Activated CD8-positive, alpha-beta T cell treated with anti-CD3 and anti-CD28 coated beads for 36 hours (primary cell): ENCODE measurements at regions of chr10 and their contacts with region 1.

Region 1: DNA sequence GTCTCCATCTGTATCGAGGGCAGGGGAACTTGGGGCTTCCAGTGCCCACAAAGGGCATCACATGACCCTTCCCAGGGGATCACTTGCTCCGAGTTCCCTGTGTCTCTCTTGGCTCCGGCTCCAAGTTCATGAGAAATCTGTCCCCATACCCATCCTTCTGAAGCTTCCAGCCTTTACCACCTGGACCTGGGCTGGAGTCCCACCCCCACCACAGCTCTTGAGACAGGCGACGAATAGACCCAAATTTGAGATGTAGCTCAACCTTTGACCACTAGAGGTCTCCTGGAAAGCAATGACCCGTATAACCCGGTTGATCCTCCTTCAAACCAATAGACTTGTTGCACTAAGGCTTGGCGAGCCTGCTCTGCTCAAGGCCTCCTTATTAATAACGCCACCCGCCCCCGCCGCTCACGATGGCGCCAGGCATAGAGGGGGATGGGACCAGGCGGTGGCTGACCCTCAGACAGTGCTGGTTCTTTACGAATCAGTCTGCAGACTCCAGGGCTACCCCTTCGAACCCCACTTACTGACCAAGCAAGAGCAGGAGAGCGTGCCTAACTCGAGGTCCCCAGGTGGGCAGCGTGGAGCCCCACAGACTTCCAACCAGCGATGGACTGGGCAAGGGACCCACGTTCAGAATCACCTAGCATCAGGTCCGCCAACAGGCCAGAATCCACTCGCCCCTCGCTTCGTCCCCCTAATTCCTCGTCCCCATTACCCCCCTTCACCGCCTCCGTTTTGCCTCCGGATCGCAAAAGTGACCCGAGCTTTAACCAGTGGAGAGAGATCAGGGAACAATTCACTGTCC is 4.4 kb upstream of the ARID5B start:
- DNase-seq: peak; percentile 74
- ATAC-seq: peak; percentile 78
- H3K4me3 Mint-ChIP-seq: peak overlapping the region; percentile 55
- H3K27ac Mint-ChIP-seq: peak overlapping the region; percentile 97
- H3K4me1 Mint-ChIP-seq: peaks cover 42% of the 10 kb centered on the region
- H3K27me3 Mint-ChIP-seq: no peaks in the 10 kb centered on the region
- CTCF ChIP-seq: peak; percentile 67

Region 2: GRCh38 chr10:61882621-61883373 is 14.3 kb before region 1 on chr10:
- CTCF ChIA-PET with region 1: interaction called, 50 read pairs
- POLR2A ChIA-PET with region 1: interaction called, 26 read pairs
- intact Hi-C with region 1: no loop called
- DNase-seq: peak; percentile 90
- ATAC-seq: peak; percentile 86
- H3K4me3 Mint-ChIP-seq: peak overlapping the region; percentile 43
- H3K27ac Mint-ChIP-seq: peak overlapping the region; percentile 95
- H3K4me1 Mint-ChIP-seq: peaks cover 30% of the 10 kb centered on the region
- H3K27me3 Mint-ChIP-seq: no peaks in the 10 kb centered on the region
- CTCF ChIP-seq: no peak

Region 3: GRCh38 chr10:61943674-61944410 is 46.8 kb after region 1 on chr10:
- CTCF ChIA-PET with region 1: interaction called, 98 read pairs
- POLR2A ChIA-PET with region 1: interaction called, 137 read pairs
- intact Hi-C with region 1: no loop called
- DNase-seq: peak; percentile 58
- ATAC-seq: peak; percentile 77
- H3K4me3 Mint-ChIP-seq: peak overlapping the region; percentile 70
- H3K27ac Mint-ChIP-seq: peak overlapping the region; percentile 98
- H3K4me1 Mint-ChIP-seq: peaks cover 64% of the 10 kb centered on the region
- H3K27me3 Mint-ChIP-seq: no peaks in the 10 kb centered on the region
- CTCF ChIP-seq: no peak

Region 4: DNA sequence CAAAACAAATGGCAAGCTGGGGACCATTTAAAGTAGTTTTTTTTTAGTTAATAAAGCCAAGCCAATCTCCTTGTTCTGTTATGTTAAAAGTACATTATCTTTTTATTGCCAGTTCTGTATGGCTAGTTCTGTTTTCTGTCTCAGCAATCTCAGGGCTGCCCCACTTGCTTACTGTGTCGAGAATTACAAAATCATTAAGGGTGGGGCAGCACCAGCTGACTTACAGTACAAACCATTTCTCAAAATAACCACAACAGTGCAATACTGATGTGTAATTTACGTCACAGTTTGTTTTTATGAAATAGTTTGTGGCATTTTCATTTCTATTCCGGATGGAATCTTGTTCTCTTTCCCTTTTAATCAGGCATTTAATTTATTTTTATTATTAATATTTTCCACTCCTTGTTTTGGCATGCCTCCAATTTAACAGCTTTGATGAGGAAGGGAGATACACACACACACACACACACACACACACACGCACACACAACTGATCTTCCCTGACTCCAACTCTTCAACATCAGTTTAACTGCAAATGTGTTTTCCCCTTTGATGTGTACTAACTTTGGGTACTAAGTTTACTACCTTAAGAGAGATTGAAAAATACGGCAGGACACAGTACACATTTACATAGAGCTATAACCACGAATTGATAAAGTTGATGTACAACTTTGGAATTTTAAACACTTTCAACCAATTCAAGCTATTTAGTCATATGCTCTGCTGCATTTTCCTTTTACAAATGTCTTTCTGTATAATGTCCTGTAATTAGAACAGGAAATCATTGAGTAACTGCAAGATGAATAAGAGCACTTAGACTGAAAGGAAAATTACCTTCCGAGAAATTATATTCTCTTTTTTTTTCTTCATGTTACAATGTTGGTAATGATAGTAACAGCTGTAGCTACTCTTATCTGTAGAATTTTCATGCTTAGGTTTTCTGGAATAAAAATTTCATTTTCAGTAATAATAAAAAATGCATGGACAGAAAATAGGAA is 95.9 kb after region 1 on chr10:
- CTCF ChIA-PET with region 1: interaction called, 6 read pairs
- POLR2A ChIA-PET with region 1: interaction called, 17 read pairs
- intact Hi-C with region 1: loop called (anchors 2 kb)
- DNase-seq: peak; percentile 72
- ATAC-seq: peak; percentile 41
- H3K4me3 Mint-ChIP-seq: peak overlapping the region; percentile 68
- H3K27ac Mint-ChIP-seq: peak overlapping the region; percentile 95
- H3K4me1 Mint-ChIP-seq: peaks cover 66% of the 10 kb centered on the region
- H3K27me3 Mint-ChIP-seq: no peaks in the 10 kb centered on the region
- CTCF ChIP-seq: no peak

Region 5: GRCh38 chr10:62183442-62183841 is 286.4 kb after region 1 on chr10:
- CTCF ChIA-PET with region 1: interaction called, 4 read pairs
- POLR2A ChIA-PET with region 1: interaction called, 12 read pairs
- intact Hi-C with region 1: loop called (anchors 5 kb)
- DNase-seq: peak; percentile 63
- ATAC-seq: peak; percentile 64
- H3K4me3 Mint-ChIP-seq: peak overlapping the region; percentile 17
- H3K27ac Mint-ChIP-seq: peak overlapping the region; percentile 99
- H3K4me1 Mint-ChIP-seq: peaks cover 82% of the 10 kb centered on the region
- H3K27me3 Mint-ChIP-seq: no peaks in the 10 kb centered on the region
- CTCF ChIP-seq: no peak

Region 6: DNA sequence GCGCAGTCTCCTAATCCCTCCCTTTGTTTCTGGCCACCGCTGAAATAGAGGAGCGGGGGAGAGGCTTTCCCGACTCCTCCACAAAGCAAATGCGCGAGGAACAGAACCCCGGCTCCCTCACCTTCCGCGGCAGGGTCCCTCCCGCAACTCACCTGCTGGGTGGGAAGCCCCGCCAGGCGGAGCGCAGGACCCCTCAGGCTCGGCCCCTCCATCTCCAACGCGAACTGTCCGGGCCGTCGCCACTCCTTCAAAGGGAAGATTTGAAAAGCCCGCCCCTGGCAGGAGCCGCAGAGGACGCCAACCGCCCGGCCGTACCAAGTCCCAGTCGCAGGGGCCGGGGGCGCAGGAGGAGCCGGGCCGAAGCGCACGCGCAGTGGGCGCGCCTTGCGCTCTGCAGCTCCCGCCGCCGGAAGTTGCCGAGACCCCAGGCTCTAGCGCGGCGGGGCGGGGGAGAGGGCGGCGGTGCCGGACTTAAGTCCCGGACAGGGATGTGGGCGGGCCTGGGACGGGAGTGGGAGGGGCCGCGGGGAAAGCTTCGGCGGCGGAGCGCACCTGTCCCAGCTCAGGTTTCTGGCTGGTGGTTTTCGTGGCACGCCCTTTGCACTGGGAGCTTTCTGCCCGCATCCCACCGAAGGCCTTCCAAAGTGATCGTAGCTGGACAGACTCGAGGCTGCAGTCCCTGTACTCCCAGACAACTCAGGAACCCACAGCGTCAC is 371.5 kb after region 1 on chr10 and contains the start of gene RTKN2:
- CTCF ChIA-PET with region 1: interaction called, 10 read pairs
- POLR2A ChIA-PET with region 1: no interaction called
- intact Hi-C with region 1: no loop called
- DNase-seq: peak; percentile 72
- ATAC-seq: peak; percentile 91
- H3K4me3 Mint-ChIP-seq: peak within 1 kb of the TSS; percentile 71
- H3K27ac Mint-ChIP-seq: no peak within 1 kb of the TSS
- H3K4me1 Mint-ChIP-seq: peaks cover 8% of the 10 kb centered on the region
- H3K27me3 Mint-ChIP-seq: peaks cover 30% of the 10 kb centered on the region
- CTCF ChIP-seq: no peak
- total RNA-seq, gene RTKN2: 1.1 to 1.4 TPM